G401 (cell line): ENCODE measurements at regions of chr3 and their contacts with region 1.

Region 1: DNA sequence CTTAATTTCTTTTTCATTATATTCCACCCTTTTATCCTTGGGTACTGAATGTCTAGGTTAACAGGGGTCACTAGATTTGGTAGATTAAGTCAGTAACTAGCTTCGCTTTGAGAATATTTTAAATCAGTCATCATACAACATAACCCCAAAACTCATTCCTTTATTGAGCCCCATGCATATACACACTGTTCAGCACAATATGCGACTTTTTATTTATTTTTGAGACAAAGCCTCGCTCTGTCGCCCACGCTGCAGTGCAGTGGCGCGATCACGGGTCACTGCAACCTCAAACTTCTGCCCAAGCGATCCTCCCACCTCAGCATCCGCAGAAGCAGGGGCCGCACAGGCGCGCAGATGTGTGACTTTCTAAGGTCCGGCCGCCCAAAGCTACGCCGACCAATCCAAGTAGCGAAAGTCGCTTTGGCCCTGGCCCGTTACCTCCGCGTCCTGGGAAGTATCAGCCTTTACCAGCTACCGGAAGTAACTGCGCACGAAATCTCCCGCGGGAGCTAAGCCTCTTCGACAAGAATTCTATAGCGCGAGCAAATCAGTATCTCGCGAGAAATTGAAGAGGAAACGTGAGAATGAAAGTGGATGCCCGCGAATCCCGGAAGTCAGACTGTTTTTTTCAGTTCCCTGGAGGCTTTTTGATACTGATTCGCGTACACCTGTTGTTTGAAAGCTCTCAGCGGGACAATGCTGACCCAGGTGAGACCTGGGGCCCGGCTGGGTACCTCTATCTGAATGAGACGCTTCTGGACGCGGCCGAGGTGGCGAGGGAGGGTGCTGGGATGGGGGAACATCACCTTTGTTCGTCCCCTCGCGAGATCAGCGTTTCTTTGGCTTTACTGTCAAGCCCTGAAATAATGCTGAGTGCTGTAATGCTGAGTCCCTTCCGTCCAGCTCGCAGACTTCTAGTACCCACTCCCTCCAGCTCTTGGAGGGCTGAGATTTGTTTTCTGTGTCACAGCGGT is at the starts of genes DHFR2 and NSUN3:
- DNase-seq: peak; percentile 91
- total RNA-seq, gene DHFR2: 0.31 and 0.81 TPM in 2 replicates
- total RNA-seq, gene NSUN3: 6.3 and 11.0 TPM in 2 replicates

Region 2: DNA sequence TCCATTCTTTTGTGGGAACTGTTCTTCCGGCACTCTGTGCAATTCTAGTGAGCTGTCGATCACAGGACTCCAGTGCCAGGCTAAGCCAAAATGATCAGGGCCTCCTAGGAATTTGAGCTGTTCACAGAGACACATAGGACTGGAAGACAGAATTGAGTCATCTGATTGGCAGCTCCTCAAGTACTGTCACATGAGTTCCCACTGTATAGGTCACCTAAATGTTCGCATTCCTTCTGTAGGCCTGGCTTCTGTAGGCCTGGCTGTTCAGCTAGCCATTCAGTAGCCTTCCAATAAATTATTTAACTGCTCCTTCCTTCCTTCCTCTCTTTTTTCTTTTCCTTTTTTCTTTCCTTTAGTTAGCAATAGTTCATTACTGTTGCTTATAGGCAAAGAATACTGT is 93.3 kb before region 1 on chr3:
- in situ Hi-C with region 1: no loop called
- DNase-seq: no peak

Region 3: DNA sequence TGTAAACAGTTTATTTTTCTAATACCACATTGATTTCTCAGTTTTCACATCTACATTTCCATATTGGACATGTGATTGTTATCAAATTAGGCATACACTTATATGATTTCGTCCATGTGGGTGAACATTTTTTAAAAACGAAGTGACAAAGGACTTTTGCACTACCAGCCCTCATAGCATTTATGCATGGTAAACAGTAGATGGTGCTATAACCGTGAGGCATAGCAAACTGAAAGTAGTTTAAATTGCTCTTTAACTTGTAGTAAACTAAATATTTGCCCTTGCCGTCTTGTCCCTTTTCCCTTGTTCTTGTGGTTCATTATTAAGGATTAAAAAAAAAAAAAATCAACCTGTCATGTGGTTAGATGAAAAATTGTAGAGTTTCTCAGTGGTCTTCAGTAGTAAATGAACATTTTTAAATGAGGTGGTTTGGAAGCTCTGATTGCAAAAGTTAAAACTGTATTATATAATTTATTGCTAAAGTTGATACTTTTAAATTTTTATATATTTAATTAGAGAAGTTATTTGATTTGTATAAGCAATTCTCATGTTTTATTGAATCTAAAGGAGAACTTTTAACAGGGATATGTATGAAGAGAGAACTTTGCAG is 58.3 kb before region 1 on chr3:
- in situ Hi-C with region 1: no loop called
- DNase-seq: peak; percentile 58

Region 4: DNA sequence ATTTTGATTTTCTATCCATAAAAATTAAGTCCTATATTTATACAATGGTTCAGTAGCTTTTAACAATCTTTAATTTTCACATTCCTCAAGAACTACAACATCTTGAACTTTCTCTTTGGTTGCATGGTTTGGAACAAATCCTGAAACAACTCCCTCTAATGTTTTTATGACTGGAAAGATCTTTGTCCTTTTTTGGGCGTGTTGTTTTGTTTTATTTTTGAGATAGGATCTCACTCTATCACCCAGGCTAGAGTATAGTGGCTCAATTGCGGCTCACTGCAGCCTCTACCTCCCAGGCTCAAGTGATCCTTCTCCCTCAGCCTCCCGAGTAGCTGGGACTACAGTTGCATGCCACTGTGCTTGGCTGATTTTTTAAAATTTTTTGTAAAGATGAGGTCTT is 38.3 kb before region 1 on chr3:
- in situ Hi-C with region 1: loop called (anchors 5 kb)
- DNase-seq: no peak

Region 5: DNA sequence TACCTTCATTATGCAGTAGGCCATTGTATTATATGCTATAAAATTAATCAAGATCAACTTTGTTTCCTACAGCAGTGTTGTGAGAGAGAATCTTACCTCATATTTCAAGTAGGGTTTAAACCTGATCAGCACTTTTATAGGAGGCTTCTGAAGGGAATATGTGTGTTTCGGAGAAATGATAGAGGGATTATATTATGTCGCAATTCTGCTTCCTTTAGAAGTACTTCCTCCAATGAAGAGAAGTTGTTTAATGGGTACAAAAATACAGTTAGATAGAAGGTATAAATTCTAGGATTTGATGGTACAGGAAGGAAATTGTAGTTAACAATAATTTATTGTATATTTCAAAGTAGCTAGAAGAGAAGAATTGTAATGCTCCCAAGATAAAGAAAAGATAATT is 55.0 kb after region 1 on chr3:
- in situ Hi-C with region 1: no loop called
- DNase-seq: no peak